ENCODE measurements at regions of chr11 and their contacts with region 1.

Region 1: GRCh38 chr11:125404776-125405435 is 91.2 kb downstream of the FEZ1 start:
- DNase-seq: peak; percentile 90
- ATAC-seq: peak; percentile 84
- H3K4me3 Mint-ChIP-seq: no peak overlapping the region
- H3K27ac Mint-ChIP-seq: 0 out of 2 replicates have a peak overlapping the region, but pooled peaks have one; percentile 29
- H3K4me1 Mint-ChIP-seq: peaks cover 61% of the 10 kb centered on the region
- H3K27me3 Mint-ChIP-seq: peaks cover 23% of the 10 kb centered on the region
- CTCF ChIP-seq: peak; percentile 98

Region 2: GRCh38 chr11:125111343-125112207 is 293.3 kb before region 1 on chr11 and contains the start of gene TMEM218:
- CTCF ChIA-PET with region 1: interaction called, 10 read pairs
- POLR2A ChIA-PET with region 1: no interaction called
- DNase-seq: peak; percentile 98
- ATAC-seq: peak; percentile 99
- H3K4me3 Mint-ChIP-seq: peak within 1 kb of the TSS; percentile 98
- H3K27ac Mint-ChIP-seq: peak within 1 kb of the TSS; percentile 98
- H3K4me1 Mint-ChIP-seq: peaks cover 14% of the 10 kb centered on the region
- H3K27me3 Mint-ChIP-seq: no peaks in the 10 kb centered on the region; the same call in 1 of the 2 replicates
- CTCF ChIP-seq: no peak
- total RNA-seq, gene TMEM218: 10.3 to 12.4 TPM (median 11.0 TPM) in 3 replicates

Region 3: GRCh38 chr11:125358254-125358840 is 46.6 kb before region 1 on chr11:
- CTCF ChIA-PET with region 1: interaction called, 49 read pairs
- POLR2A ChIA-PET with region 1: interaction called, 4 read pairs
- DNase-seq: no peak
- ATAC-seq: no peak
- H3K4me3 Mint-ChIP-seq: no peak overlapping the region
- H3K27ac Mint-ChIP-seq: no peak overlapping the region
- H3K4me1 Mint-ChIP-seq: no peaks in the 10 kb centered on the region; the same call in 1 of the 2 replicates
- H3K27me3 Mint-ChIP-seq: no peaks in the 10 kb centered on the region; the same call in 1 of the 2 replicates
- CTCF ChIP-seq: no peak

Region 4: DNA sequence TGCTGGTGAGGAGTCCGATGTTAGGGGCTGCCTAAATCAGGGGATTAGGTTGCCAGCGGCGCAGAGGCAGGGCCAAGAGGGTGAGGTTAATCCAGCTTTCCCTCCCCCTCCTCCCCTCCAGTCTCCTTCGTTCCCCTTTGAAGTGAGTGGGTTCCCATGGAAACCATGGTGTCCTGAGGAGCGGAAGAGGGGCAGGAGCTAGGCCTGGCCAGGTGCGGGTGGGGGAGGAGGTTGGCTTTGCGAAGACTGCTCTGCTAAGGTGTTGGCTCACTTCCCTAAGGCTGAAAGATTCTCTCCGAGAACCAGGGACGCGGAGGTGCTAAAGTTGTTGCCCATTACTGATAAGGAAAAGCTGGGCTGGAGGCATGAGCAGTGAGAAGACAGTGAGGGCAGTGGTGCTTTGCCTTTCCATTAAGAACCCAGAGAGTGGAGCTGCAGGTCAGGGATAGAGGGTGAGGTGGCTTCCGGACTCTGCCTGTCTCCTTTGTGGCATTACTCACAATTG is 33.4 kb before region 1 on chr11:
- CTCF ChIA-PET with region 1: interaction called, 43 read pairs
- POLR2A ChIA-PET with region 1: no interaction called
- DNase-seq: peak; percentile 86
- ATAC-seq: peak; percentile 88
- H3K4me3 Mint-ChIP-seq: peak overlapping the region; percentile 64
- H3K27ac Mint-ChIP-seq: peak overlapping the region; percentile 97
- H3K4me1 Mint-ChIP-seq: peaks cover 58% of the 10 kb centered on the region
- H3K27me3 Mint-ChIP-seq: peaks cover 5% of the 10 kb centered on the region
- CTCF ChIP-seq: no peak

Region 5: GRCh38 chr11:125390946-125391345 is 14.0 kb before region 1 on chr11:
- CTCF ChIA-PET with region 1: interaction called, 12 read pairs
- POLR2A ChIA-PET with region 1: no interaction called
- DNase-seq: no peak
- ATAC-seq: peak; percentile 43; the same call in 1 of the 2 replicates
- H3K4me3 Mint-ChIP-seq: no peak overlapping the region
- H3K27ac Mint-ChIP-seq: peak overlapping the region; percentile 34
- H3K4me1 Mint-ChIP-seq: peaks cover 33% of the 10 kb centered on the region
- H3K27me3 Mint-ChIP-seq: no peaks in the 10 kb centered on the region
- CTCF ChIP-seq: no peak

Measured in WTC11 (cell line).